Naive thymus-derived CD8-positive, alpha-beta T cell (primary cell): ENCODE measurements at regions of chr1 and their contacts with region 1.

Region 1: DNA sequence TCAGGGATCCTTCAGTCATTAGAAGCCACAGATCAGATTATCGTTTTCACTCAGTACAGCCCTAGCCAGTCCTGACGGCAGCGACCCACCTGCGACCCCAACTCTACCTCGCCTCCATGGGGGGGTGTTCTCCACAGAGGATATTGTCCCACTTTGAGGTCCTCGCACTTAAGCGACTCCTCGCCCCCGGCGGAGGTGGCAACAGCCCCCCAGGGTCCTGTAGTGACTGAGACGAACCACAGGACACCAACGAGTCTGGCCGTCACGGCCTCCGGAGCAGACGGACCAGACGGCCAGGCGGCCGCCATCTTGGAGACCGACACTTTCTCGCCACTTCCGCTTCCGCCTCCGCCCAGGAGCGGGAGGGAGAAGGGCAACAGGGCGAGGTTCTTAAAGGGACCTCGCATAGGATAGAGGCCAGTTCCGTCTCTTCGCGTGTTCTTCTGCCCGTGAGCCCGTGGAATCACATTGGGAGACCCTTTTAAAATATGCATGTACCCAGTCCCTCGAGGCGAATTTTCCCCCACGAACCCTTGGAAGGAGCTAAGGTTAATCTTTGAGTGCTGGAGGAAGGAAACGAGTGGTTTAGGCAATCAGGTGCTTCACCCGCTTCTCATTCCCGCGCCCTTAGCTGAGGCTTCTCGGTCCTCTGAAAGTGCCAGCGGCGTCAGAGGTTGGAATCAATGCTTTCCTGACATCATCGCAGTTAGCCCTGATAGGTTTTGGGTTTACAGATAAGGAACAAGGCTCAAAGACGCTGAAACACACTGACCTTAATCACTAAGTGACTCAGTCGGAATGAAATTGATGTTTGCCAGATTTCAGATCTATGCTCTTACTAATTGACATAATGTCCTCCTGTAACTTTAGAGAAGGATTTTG is at the start of gene TM2D1:
- DNase-seq: peak; percentile 70 to 89 (median 82)
- ATAC-seq: peak; percentile 96
- H3K4me3 Mint-ChIP-seq: peak within 1 kb of the TSS; percentile 95 to 99 (median 99)
- H3K27ac Mint-ChIP-seq: peak within 1 kb of the TSS; percentile 94 to 99 (median 98)
- H3K4me1 Mint-ChIP-seq: peaks cover 8 to 43% (median 34%) of the 10 kb centered on the region in 4 donors
- H3K27me3 Mint-ChIP-seq: no peaks in the 10 kb centered on the region
- polyA plus RNA-seq, gene TM2D1: 27.7 to 37.9 (median 32.1) TPM

Region 2: GRCh38 chr1:61605607-61606321 is 119.3 kb before region 1 on chr1:
- POLR2A ChIA-PET with region 1: no interaction called
- DNase-seq: no peak
- ATAC-seq: no peak
- H3K4me3 Mint-ChIP-seq: no peak overlapping the region
- H3K27ac Mint-ChIP-seq: no peak overlapping the region
- H3K4me1 Mint-ChIP-seq: no peaks in the 10 kb centered on the region
- H3K27me3 Mint-ChIP-seq: no peaks in the 10 kb centered on the region

Region 3: DNA sequence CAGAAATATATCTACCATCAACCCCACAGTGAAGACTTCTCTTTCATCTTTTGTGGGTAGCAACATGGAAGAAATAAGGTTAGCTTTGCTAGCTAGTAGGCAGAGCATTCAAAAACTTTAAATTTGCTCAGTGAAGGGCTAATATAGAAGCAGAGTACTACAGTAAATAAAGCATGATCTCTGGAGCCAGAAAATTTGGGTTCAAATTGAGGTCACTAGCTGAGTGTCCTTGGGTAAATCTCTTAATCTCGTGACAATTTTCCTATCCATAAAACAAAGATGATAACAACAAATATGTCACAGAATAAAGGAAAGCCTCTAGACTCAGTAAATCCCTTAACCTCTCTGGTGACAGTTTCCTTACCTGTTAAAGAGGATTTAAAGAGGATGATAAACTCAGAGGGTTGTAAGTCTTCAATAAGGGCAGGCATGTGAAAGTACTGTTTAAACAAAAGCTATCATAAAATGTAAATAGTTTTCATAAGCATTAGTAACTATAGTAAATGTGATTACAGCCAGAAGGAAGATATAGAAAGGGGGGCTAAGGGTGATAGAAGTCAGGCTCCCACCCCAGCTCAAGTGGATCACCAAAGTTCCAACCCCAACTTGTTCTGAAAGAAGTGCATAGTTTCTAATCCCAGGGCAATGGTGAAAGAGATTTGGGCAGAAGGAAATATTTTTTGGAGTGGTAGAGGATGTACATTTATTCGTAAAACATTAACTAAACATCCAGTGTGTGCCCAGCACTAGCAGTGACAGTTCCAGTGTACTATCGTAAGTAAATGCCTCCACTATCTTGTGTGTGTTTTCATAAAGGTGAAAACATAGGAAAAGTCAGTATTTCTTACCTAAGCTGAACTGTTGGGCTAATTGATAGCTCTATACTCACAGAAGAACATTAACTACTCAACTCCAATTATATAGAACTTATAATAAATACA is 24.9 kb before region 1 on chr1:
- POLR2A ChIA-PET with region 1: no interaction called
- DNase-seq: no peak
- ATAC-seq: no peak
- H3K4me3 Mint-ChIP-seq: no peak overlapping the region
- H3K27ac Mint-ChIP-seq: peak overlapping the region in 3 of 10 donors; percentile 2 to 85 (median 13)
- H3K4me1 Mint-ChIP-seq: peaks cover 0 to 4% (median under 1%) of the 10 kb centered on the region in 4 donors
- H3K27me3 Mint-ChIP-seq: no peaks in the 10 kb centered on the region

Region 4: DNA sequence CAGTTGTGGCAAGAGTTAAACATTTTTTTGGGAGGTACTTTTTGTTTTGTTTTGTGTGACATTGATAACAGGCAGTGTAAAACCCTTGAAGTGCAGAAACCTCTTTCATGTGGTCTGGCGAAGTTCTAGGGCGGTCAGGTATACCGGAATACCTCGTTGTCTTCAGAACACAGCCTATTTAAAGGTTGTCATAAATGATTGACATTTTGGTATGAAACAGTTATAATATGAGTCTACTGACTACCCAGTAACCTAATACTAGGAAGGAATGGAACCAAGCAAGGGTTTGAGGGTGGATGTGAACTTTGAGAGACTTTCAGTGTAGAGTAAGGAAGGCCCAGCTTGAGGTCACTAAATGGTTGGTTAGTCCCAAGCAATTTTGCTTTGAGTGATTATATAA is 57.7 kb after region 1 on chr1:
- POLR2A ChIA-PET with region 1: interaction called, 10 read pairs
- DNase-seq: peak; percentile 17 to 93 (median 76)
- ATAC-seq: peak; percentile 99 to 100
- H3K4me3 Mint-ChIP-seq: peak overlapping the region; percentile 47 to 86 (median 81)
- H3K27ac Mint-ChIP-seq: peak overlapping the region; percentile 23 to 91 (median 88)
- H3K4me1 Mint-ChIP-seq: peaks cover 22 to 62% (median 47%) of the 10 kb centered on the region in 4 donors
- H3K27me3 Mint-ChIP-seq: no peaks in the 10 kb centered on the region